Heart left ventricle (tissue), 16 donors: ENCODE measurements at regions of chr9 and their contacts with region 1.

Region 1: DNA sequence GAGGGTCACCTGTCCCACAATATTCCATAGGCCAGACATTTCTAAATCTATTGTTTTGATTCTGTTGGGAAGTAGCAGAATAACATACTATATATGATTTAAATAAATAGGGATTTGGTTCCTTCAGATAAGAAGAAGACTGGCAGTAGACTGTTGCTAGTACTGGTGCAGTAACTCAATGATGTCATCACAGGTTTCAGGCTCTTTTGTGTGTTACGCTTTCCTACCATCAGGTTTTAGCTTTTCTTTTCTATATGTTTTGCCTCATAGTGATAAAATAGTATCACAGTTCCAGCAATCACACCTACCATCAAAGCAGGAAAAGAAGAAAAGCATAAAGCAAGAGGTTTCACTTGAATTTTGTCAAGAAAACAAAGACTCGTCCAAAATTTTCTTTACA is 52.6 kb upstream of the OR13F1 start:
- DNase-seq: no peak
- ATAC-seq: no peak
- H3K4me3 ChIP-seq: no peak overlapping the region
- H3K27ac ChIP-seq: no peak overlapping the region
- H3K4me1 ChIP-seq: no peaks in the 10 kb centered on the region
- H3K27me3 ChIP-seq: no peaks in the 10 kb centered on the region
- CTCF ChIP-seq: no peak
- POLR2A ChIP-seq: no peak

Region 2: DNA sequence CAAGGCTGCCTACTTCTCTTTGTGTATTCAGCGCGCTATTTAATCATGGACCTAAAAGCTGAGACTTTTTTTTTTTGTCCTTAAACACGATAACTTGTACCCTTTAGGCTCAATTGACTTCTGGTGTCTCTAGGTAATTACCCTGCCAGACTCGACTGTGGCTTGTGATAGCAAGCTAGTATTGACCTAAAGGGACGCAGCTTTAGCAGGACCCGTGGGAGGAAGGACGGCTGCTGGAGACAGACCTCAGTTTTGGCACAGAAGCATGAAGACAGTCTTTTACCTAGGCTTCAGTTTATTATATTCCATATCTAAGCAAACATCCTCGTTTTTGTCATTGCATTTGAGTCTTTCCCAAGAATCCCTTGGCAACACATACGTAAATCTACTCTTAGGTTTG is 242.1 kb before region 1 on chr9:
- intact Hi-C with region 1: no loop called
- DNase-seq: no peak
- ATAC-seq: no peak
- H3K4me3 ChIP-seq: no peak overlapping the region
- H3K27ac ChIP-seq: no peak overlapping the region
- H3K4me1 ChIP-seq: no peaks in the 10 kb centered on the region
- H3K27me3 ChIP-seq: no peaks in the 10 kb centered on the region
- CTCF ChIP-seq: no peak
- POLR2A ChIP-seq: no peak

Region 3: DNA sequence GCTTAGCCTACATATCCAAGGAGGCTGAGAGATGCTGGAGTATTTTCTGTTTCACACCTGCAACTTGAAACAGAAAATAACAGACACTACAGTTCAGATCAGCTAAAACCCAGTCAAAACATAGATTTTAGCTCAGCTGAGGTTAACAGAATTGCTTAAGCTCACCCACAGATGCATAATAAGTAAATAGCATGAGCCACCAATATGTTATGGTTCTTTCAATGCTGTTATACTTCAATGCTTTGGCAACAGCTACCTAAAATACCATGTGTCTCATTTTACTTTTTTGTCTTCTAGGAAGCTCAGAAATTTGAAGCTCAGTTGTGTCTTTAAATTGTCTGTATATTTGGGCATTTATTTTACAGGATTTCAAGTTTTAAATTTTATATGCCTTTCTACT is 16.8 kb after region 1 on chr9:
- intact Hi-C with region 1: loop called in 1 of 10 experiments (anchors 2 kb)
- DNase-seq: no peak
- ATAC-seq: no peak
- H3K4me3 ChIP-seq: no peak overlapping the region
- H3K27ac ChIP-seq: no peak overlapping the region
- H3K4me1 ChIP-seq: no peaks in the 10 kb centered on the region
- H3K27me3 ChIP-seq: no peaks in the 10 kb centered on the region
- CTCF ChIP-seq: no peak
- POLR2A ChIP-seq: no peak

Region 4: DNA sequence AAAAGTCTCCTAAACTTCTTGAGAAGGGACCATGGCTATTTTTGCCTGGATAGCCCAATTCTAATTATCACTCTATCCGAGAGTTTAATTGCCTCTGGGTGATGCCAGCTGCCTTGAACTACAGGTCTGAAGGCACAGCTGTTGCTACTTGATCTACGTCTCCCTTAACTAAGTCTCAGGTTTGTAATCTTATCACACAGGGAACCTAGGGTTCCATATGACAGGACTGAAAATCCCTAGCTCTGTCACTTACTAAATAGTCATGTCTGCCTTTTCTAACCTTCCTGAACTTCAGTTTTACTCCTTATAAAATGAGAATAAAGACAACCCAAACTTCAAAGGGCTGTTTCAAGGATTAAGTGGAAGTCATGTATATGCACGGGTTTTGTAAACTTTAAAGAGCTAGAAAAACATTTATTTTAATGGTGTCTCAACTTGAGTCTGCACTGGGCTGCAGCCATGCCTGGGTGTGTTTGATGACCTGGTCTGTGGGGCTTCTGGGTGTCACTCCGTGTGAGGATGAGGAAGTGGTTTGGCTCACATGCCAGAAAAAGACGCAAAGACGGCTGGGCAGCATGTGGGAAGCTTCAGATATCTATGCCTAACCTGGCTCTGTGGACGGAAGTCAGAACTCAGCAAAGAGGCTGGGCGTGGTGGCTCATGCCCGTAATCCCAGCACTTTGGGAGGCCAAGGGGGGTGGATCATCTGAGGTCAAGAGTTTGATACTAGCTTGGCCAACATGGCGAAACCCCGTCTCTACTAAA is 663.6 kb after region 1 on chr9:
- intact Hi-C with region 1: no loop called
- DNase-seq: peak in 4 of 5 donors; percentile 27 to 54 (median 44)
- ATAC-seq: peak; percentile 36 to 83 (median 59)
- H3K4me3 ChIP-seq: no peak overlapping the region
- H3K27ac ChIP-seq: peak overlapping the region in 1 of 12 donors; percentile 62
- H3K4me1 ChIP-seq: peaks cover 0 to 18% (median 0%) of the 10 kb centered on the region in 12 donors
- H3K27me3 ChIP-seq: no peaks in the 10 kb centered on the region
- CTCF ChIP-seq: no peak
- POLR2A ChIP-seq: no peak